ENCODE measurements at regions of chr10 and their contacts with region 1.

Region 1: DNA sequence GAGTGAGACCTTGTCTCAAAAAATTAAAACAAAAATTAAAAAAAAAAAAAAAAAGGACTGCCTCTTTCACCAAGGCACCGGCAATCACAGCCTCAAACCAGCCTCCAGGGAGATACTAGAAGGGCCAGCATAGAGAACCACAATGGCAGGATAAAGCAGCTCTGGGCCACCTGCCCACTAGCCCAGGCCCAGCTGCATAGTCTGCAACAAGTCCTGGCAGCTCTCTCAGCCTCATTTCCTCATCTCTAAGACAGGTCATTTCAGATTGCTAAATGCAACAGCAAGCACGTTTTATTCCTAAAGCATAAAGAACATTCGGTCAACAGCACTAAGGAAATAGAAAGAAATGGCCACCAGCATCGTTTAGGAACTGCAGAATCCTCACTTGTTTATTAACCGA is 28.8 kb downstream of the XPNPEP1 start:
- DNase-seq: peak; percentile 68 to 80 (median 74)
- H3K4me3 ChIP-seq: no peak overlapping the region
- H3K27ac ChIP-seq: peak overlapping the region; percentile 25 to 59
- H3K4me1 ChIP-seq: peaks cover 26% of the 10 kb centered on the region
- H3K27me3 ChIP-seq: no peaks in the 10 kb centered on the region
- CTCF ChIP-seq: no peak
- EP300 ChIP-seq: no peak
- POLR2A ChIP-seq: no peak

Region 2: DNA sequence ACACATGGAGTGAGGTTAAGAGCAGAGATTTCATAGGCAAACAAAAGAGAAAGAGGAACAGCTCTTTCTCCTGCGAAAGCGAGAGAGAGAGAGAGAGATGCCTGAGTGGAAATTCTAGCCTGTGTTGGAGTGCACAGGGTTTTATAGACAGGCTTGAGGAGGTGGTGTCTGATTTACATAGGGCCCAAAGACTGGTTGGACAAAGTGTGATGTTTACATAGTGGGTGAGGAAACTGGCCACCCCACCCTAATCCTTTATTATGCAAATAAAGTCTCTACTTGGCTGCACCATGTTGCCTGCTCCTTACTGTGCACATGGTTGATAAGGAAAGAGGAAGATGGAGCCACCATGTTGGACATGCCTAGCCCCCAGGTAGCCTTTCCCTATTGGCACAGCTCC is 1762.2 kb before region 1 on chr10:
- intact Hi-C with region 1: no loop called
- DNase-seq: no peak
- H3K4me3 ChIP-seq: no peak overlapping the region
- H3K27ac ChIP-seq: no peak overlapping the region
- H3K4me1 ChIP-seq: no peaks in the 10 kb centered on the region
- H3K27me3 ChIP-seq: no peaks in the 10 kb centered on the region
- CTCF ChIP-seq: no peak
- EP300 ChIP-seq: no peak
- POLR2A ChIP-seq: no peak

Region 3: GRCh38 chr10:109914966-109915365 is 20.4 kb after region 1 on chr10:
- intact Hi-C with region 1: no loop called
- DNase-seq: no peak
- H3K4me3 ChIP-seq: no peak overlapping the region
- H3K27ac ChIP-seq: no peak overlapping the region
- H3K4me1 ChIP-seq: no peaks in the 10 kb centered on the region
- H3K27me3 ChIP-seq: no peaks in the 10 kb centered on the region
- CTCF ChIP-seq: no peak
- EP300 ChIP-seq: no peak
- POLR2A ChIP-seq: no peak

Region 4: DNA sequence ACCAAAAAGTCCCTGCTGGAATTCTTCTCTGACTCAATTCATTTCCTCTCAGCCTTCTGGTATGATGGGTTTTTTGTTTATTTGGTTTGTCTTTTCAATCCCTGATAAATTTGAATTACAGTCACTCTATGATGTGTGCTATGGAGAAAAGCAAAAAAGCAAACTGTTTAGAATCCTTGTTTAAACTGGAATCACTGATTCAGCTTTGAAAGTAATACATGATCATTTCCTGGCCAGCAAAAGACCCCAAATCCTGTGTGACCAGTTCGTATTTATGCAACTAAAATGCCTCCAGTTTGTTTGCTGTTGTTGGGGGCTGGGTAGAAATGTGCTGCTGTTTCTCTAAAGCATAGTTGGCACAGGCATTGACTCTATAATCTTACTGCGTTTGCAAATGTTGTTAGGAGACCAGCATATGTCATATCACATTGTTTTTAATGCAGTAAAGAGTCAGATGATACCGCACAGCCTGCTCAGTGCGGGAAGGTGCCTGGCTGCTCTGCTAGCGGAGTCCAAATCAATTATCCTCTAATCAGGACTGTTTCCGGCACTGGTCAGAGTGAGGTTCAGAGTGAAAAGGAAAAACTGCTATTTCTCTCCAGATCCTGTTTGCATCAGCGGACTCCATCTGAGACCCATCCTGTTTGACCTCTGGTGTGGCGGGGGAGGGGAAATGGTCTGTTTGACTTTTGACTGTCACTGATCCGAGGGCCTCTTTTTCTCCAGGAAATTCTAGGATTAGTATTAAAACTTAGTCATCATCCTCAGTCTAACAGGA is 72.6 kb after region 1 on chr10:
- intact Hi-C with region 1: loop called in 2 of 4 experiments (anchors 5 kb)
- DNase-seq: peak in 1 of 5 donors; percentile 35
- H3K4me3 ChIP-seq: no peak overlapping the region
- H3K27ac ChIP-seq: no peak overlapping the region
- H3K4me1 ChIP-seq: peaks cover 10% of the 10 kb centered on the region
- H3K27me3 ChIP-seq: no peaks in the 10 kb centered on the region
- CTCF ChIP-seq: no peak
- EP300 ChIP-seq: no peak
- POLR2A ChIP-seq: no peak